Activated naive CD4-positive, alpha-beta T cell treated with anti-CD3 and anti-CD28 coated beads for 36 hours (primary cell): ENCODE measurements at regions of chr6 and their contacts with region 1.

Region 1: GRCh38 chr6:137218917-137219663 is at the start of gene IFNGR1:
- DNase-seq: peak; percentile 97
- H3K4me3 Mint-ChIP-seq: peak within 1 kb of the TSS; percentile 93
- H3K27ac Mint-ChIP-seq: peak within 1 kb of the TSS; percentile 94
- H3K4me1 Mint-ChIP-seq: peaks cover 49% of the 10 kb centered on the region
- H3K27me3 Mint-ChIP-seq: no peaks in the 10 kb centered on the region
- total RNA-seq, gene IFNGR1: 25.5 to 26.4 TPM

Region 2: DNA sequence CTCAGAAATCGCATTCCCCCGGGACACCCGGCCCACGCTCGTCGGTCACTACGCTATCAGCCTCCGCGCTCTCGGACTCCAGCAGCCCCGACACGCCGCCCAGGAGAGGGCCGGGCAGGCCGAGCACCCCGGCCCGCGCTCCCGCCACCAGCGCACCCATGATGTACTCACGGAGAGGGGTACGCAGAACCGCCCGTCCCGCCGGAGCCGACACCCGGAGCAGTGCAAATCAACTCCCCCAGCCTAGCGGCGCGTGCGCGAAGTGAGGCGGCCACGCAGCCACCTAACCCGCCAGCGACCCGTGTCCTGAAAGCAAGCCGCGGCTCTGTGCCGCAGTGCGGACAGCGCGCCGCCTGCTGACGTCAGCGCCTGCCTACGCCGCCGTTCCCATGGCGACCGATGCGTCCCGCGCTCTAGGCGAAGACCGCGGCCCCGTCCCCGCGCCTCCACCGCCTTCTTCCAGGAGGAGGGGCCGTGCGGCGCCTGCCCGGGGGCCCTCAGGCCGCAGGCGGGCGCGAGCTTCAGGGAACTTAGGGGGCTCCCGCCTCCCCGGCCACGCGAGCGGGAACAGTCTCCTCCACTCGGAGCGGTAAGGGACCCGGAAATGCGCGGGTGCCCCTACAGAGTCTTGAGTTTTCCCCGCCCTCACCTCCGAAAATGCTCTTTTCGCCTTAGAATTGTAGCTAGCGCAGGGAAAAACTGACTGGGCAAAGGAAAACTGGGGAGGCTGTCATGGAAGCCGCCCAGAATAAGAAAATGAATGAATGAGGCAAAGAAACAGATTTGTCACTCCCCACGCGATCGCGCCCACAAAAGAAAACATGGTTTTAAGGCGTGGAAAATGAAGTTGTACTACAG is 1721.4 kb before region 1 on chr6 and contains the start of gene AHI1:
- CTCF ChIA-PET with region 1: no interaction called
- intact Hi-C with region 1: loop called (anchors 5 kb)
- DNase-seq: peak; percentile 85
- H3K4me3 Mint-ChIP-seq: no peak within 1 kb of the TSS
- H3K27ac Mint-ChIP-seq: no peak within 1 kb of the TSS
- H3K4me1 Mint-ChIP-seq: peaks cover 16% of the 10 kb centered on the region
- H3K27me3 Mint-ChIP-seq: no peaks in the 10 kb centered on the region
- total RNA-seq, gene AHI1: 17.8 to 18.8 TPM

Region 3: GRCh38 chr6:136593748-136594490 is 625.2 kb before region 1 on chr6:
- CTCF ChIA-PET with region 1: no interaction called
- intact Hi-C with region 1: loop called (anchors 5 kb)
- DNase-seq: peak; percentile 79
- H3K4me3 Mint-ChIP-seq: peak overlapping the region; percentile 27
- H3K27ac Mint-ChIP-seq: peak overlapping the region; percentile 83
- H3K4me1 Mint-ChIP-seq: peaks cover 19% of the 10 kb centered on the region
- H3K27me3 Mint-ChIP-seq: no peaks in the 10 kb centered on the region

Region 4: GRCh38 chr6:136921936-136922684 is 297.0 kb before region 1 on chr6 and contains the start of gene SLC35D3:
- CTCF ChIA-PET with region 1: no interaction called
- intact Hi-C with region 1: loop called (anchors 5 kb)
- DNase-seq: peak; percentile 30
- H3K4me3 Mint-ChIP-seq: peak within 1 kb of the TSS; percentile 67
- H3K27ac Mint-ChIP-seq: no peak within 1 kb of the TSS
- H3K4me1 Mint-ChIP-seq: peaks cover 24% of the 10 kb centered on the region
- H3K27me3 Mint-ChIP-seq: peaks cover 56% of the 10 kb centered on the region
- total RNA-seq, gene SLC35D3: not detected

Region 5: GRCh38 chr6:136994782-136995181 is 224.3 kb before region 1 on chr6:
- CTCF ChIA-PET with region 1: no interaction called
- intact Hi-C with region 1: no loop called
- DNase-seq: no peak
- H3K4me3 Mint-ChIP-seq: no peak overlapping the region
- H3K27ac Mint-ChIP-seq: no peak overlapping the region
- H3K4me1 Mint-ChIP-seq: no peaks in the 10 kb centered on the region
- H3K27me3 Mint-ChIP-seq: peaks cover 44% of the 10 kb centered on the region

Region 6: GRCh38 chr6:137155830-137156229 is 63.3 kb before region 1 on chr6:
- CTCF ChIA-PET with region 1: no interaction called
- intact Hi-C with region 1: loop called (anchors 1 kb)
- DNase-seq: peak; percentile 68
- H3K4me3 Mint-ChIP-seq: no peak overlapping the region
- H3K27ac Mint-ChIP-seq: peak overlapping the region; percentile 60
- H3K4me1 Mint-ChIP-seq: peaks cover 16% of the 10 kb centered on the region
- H3K27me3 Mint-ChIP-seq: peaks cover 13% of the 10 kb centered on the region

Region 7: GRCh38 chr6:137191670-137192069 is 27.4 kb before region 1 on chr6:
- CTCF ChIA-PET with region 1: no interaction called
- intact Hi-C with region 1: no loop called
- DNase-seq: no peak
- H3K4me3 Mint-ChIP-seq: no peak overlapping the region
- H3K27ac Mint-ChIP-seq: no peak overlapping the region
- H3K4me1 Mint-ChIP-seq: no peaks in the 10 kb centered on the region
- H3K27me3 Mint-ChIP-seq: no peaks in the 10 kb centered on the region

Region 8: GRCh38 chr6:137233911-137234863 is 15.1 kb after region 1 on chr6:
- CTCF ChIA-PET with region 1: no interaction called
- intact Hi-C with region 1: loop called (anchors 1 kb)
- DNase-seq: peak; percentile 21
- H3K4me3 Mint-ChIP-seq: no peak overlapping the region
- H3K27ac Mint-ChIP-seq: peak overlapping the region; percentile 28
- H3K4me1 Mint-ChIP-seq: peaks cover 38% of the 10 kb centered on the region
- H3K27me3 Mint-ChIP-seq: peaks cover 5% of the 10 kb centered on the region

Region 9: GRCh38 chr6:138001750-138002349 is 782.8 kb after region 1 on chr6:
- CTCF ChIA-PET with region 1: no interaction called
- intact Hi-C with region 1: loop called (anchors 1 kb)
- DNase-seq: peak; percentile 84
- H3K4me3 Mint-ChIP-seq: no peak overlapping the region
- H3K27ac Mint-ChIP-seq: no peak overlapping the region
- H3K4me1 Mint-ChIP-seq: peaks cover 16% of the 10 kb centered on the region
- H3K27me3 Mint-ChIP-seq: peaks cover 3% of the 10 kb centered on the region